Right ventricle myocardium inferior (tissue), 1 donor: ENCODE measurements at regions of chr2 and their contacts with region 1.

Region 1: GRCh38 chr2:239934571-239935171 is 90.5 kb downstream of the NDUFA10 start:
- DNase-seq: no peak
- ATAC-seq: peak; percentile 68

Region 2: DNA sequence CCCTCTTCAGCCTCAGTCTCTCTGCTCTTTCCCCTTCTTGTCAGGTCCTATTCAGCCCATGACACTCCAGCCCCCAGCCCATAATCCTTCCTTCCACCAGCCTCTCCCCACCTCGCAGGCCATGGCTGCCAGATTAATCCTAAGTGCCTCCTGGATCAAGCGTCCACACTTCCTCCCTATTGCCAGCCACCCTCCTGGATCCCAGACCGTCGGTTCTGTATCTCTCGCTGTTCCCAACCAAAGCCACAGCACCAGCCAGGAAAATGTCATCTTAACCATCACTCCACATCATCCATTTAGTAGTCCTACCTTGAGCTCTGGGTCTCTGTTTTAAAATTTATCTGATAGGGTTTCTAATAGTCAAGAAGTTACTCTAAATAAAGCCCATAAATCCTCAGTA is 41.0 kb after region 1 on chr2:
- intact Hi-C with region 1: loop called (anchors 1 kb)
- DNase-seq: no peak
- ATAC-seq: peak; percentile 54

Region 3: GRCh38 chr2:239991689-239992314 is 57.1 kb after region 1 on chr2:
- intact Hi-C with region 1: loop called (anchors 2 kb)
- DNase-seq: no peak
- ATAC-seq: peak; percentile 52

Region 4: GRCh38 chr2:240013343-240013742 is 78.7 kb after region 1 on chr2:
- intact Hi-C with region 1: no loop called
- DNase-seq: no peak
- ATAC-seq: no peak